Activated CD4-positive, alpha-beta T cell treated with anti-CD3 and anti-CD28 coated beads for 36 hours (primary cell): ENCODE measurements at regions of chrX and their contacts with region 1.

Region 1: GRCh38 chrX:78103623-78104446 is at the start of gene PGK1:
- DNase-seq: peak; percentile 96
- ATAC-seq: peak; percentile 97
- H3K4me3 Mint-ChIP-seq: peak within 1 kb of the TSS; percentile 98
- H3K27ac Mint-ChIP-seq: peak within 1 kb of the TSS; percentile 95
- H3K4me1 Mint-ChIP-seq: peaks cover 31% of the 10 kb centered on the region
- H3K27me3 Mint-ChIP-seq: no peaks in the 10 kb centered on the region
- total RNA-seq, gene PGK1: 1,263 to 1,446 TPM

Region 2: GRCh38 chrX:76172325-76172893 is 1931.4 kb before region 1 on chrX:
- CTCF ChIA-PET with region 1: no interaction called
- POLR2A ChIA-PET with region 1: no interaction called
- intact Hi-C with region 1: loop called in 1 of 2 experiments (anchors 10 kb)
- DNase-seq: no peak
- ATAC-seq: peak; percentile 70
- H3K4me3 Mint-ChIP-seq: peak overlapping the region; percentile 87
- H3K27ac Mint-ChIP-seq: peak overlapping the region; percentile 97
- H3K4me1 Mint-ChIP-seq: peaks cover 49% of the 10 kb centered on the region
- H3K27me3 Mint-ChIP-seq: no peaks in the 10 kb centered on the region

Region 3: GRCh38 chrX:77899081-77899828 is 204.6 kb before region 1 on chrX and contains the start of gene COX7B:
- CTCF ChIA-PET with region 1: interaction called, 3 read pairs
- POLR2A ChIA-PET with region 1: no interaction called
- intact Hi-C with region 1: loop called (anchors 1 to 5 kb)
- DNase-seq: peak; percentile 71
- ATAC-seq: peak; percentile 70
- H3K4me3 Mint-ChIP-seq: peak within 1 kb of the TSS; percentile 96
- H3K27ac Mint-ChIP-seq: peak within 1 kb of the TSS; percentile 97
- H3K4me1 Mint-ChIP-seq: peaks cover 20% of the 10 kb centered on the region
- H3K27me3 Mint-ChIP-seq: no peaks in the 10 kb centered on the region
- total RNA-seq, gene COX7B: 303 to 375 TPM

Region 4: DNA sequence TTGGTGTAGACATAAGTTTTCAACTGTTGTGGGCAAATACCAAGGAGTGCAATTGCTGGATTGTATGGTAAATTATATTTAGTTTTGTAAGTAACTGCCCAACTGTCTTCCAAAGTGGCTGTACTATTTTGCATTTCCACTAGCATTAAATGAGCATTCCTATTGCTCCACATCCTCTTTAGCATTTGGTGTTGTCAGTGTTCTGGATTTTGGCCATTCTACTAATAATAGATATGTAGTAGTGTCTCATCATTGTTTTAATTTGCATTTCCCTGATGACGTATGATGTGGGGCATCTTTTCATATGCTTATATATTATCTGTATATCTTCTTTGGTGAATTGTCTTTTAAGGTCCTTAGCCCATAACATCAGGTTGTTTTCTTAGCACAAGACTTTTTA is 151.7 kb before region 1 on chrX:
- CTCF ChIA-PET with region 1: no interaction called
- POLR2A ChIA-PET with region 1: no interaction called
- intact Hi-C with region 1: no loop called
- DNase-seq: no peak
- ATAC-seq: no peak
- H3K4me3 Mint-ChIP-seq: no peak overlapping the region
- H3K27ac Mint-ChIP-seq: no peak overlapping the region
- H3K4me1 Mint-ChIP-seq: peaks cover 11% of the 10 kb centered on the region
- H3K27me3 Mint-ChIP-seq: no peaks in the 10 kb centered on the region

Region 5: DNA sequence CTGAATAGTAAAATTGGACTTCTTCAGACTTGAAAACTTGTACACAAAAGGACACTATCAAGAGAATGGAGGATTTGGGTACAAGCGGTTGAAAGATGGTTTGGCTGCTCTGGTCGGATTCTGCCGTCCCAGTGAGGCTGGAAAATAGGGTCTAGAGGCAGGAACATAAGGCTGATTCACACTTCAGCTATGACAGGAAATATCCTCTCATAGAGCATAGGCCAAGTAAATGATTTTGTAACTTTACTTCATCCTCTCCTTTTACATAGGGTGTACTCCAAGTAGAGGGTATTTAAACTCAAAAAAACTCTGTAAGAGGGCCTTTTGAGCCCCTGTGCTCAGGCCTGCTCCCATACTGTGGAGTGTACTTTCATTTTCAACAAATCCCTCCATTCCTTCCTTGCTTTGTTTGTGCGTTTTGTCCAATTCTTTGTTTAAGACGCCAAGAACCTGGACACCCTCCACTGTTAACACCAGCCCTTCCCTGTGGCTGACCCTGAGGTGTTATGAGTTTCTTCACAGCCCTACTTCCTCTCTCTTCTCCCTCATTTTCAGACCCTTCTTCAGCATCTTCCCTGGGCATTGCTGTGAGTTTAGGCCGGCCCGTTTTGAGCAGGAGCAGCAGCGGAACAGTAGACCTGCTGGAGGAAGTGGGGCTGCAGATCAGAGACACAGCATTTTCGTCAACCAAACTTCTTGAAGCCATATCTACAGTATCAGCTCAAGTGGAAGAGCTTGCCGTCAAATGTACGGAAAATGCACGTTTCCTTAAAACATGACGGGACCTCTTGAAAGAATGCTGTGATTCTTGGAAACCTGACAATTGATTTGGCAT is 141.6 kb before region 1 on chrX:
- CTCF ChIA-PET with region 1: no interaction called
- POLR2A ChIA-PET with region 1: no interaction called
- intact Hi-C with region 1: loop called (anchors 1 to 5 kb)
- DNase-seq: peak; percentile 16
- ATAC-seq: peak; percentile 54
- H3K4me3 Mint-ChIP-seq: peak overlapping the region; percentile 68
- H3K27ac Mint-ChIP-seq: peak overlapping the region; percentile 92
- H3K4me1 Mint-ChIP-seq: peaks cover 47% of the 10 kb centered on the region
- H3K27me3 Mint-ChIP-seq: no peaks in the 10 kb centered on the region

Region 6: DNA sequence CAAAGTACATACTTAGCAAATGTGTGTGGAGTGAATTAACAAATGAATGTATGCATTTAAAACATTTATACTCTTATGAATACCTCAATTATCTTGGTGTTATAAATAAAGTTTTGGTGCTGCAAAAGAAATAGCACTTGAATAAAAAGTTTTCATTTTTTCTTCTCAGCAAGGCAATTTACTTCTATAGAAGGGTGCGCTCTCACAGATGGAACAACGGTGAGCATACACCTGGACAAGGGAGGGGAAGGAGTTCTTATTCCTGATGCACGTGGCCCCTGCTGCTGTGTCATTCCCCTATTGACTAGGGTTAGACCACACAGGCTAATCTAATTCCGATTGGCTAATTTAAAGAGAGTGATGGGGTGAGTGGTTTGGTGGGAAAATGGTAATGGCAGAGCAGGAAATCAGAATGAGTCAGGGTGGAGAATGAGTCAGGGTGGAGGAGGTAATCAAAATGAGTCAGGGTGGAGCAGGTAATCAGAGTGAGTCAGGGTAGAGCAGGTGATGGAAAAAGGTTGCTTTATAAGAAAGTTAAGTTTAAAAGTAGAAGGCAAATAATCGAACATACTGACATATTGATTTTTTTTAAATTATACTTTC is 27.9 kb before region 1 on chrX:
- CTCF ChIA-PET with region 1: no interaction called
- POLR2A ChIA-PET with region 1: no interaction called
- intact Hi-C with region 1: loop called in 1 of 2 experiments (anchors 1 kb)
- DNase-seq: peak; percentile 30
- ATAC-seq: peak; percentile 44
- H3K4me3 Mint-ChIP-seq: no peak overlapping the region
- H3K27ac Mint-ChIP-seq: peak overlapping the region; percentile 15
- H3K4me1 Mint-ChIP-seq: peaks cover 10% of the 10 kb centered on the region
- H3K27me3 Mint-ChIP-seq: no peaks in the 10 kb centered on the region

Region 7: DNA sequence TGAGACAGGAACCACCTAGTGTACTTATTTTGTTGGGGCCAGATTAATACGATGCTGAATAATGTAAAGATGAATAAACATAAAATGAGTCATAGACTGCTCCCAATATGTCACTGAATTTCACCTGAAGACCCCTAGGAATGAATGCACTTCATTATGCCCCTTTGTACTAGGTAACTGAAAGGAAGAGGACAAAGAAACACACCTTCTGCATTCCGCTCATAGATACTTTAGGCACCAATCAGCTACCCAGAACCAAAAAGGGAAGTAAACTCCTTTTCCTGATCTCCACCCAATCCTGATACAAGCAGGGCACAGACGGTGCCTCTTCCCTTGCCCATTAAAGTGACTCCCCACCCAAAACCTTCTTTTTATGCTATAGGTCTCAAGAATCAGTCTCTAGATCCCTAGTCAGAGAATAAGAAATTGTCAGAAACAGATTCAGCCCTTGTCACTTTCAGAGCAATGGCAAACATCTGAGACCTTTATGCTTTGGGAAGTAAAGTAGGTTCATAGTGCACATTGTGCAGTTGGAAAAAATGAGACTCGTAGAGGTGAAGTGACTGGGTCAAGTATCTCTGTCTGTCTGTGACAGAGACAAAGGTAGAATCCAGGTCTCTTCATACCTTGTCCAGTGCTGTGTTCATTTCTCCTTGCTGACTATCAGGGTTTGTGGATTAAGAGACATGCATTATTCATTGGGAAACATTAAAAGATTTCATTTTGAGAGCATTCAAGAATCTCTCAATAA is 1043.0 kb after region 1 on chrX:
- CTCF ChIA-PET with region 1: no interaction called
- POLR2A ChIA-PET with region 1: no interaction called
- intact Hi-C with region 1: loop called in 1 of 2 experiments (anchors 5 kb)
- DNase-seq: no peak
- ATAC-seq: peak; percentile 52
- H3K4me3 Mint-ChIP-seq: peak overlapping the region; percentile 88
- H3K27ac Mint-ChIP-seq: peak overlapping the region; percentile 97
- H3K4me1 Mint-ChIP-seq: peaks cover 33% of the 10 kb centered on the region
- H3K27me3 Mint-ChIP-seq: no peaks in the 10 kb centered on the region

Region 8: DNA sequence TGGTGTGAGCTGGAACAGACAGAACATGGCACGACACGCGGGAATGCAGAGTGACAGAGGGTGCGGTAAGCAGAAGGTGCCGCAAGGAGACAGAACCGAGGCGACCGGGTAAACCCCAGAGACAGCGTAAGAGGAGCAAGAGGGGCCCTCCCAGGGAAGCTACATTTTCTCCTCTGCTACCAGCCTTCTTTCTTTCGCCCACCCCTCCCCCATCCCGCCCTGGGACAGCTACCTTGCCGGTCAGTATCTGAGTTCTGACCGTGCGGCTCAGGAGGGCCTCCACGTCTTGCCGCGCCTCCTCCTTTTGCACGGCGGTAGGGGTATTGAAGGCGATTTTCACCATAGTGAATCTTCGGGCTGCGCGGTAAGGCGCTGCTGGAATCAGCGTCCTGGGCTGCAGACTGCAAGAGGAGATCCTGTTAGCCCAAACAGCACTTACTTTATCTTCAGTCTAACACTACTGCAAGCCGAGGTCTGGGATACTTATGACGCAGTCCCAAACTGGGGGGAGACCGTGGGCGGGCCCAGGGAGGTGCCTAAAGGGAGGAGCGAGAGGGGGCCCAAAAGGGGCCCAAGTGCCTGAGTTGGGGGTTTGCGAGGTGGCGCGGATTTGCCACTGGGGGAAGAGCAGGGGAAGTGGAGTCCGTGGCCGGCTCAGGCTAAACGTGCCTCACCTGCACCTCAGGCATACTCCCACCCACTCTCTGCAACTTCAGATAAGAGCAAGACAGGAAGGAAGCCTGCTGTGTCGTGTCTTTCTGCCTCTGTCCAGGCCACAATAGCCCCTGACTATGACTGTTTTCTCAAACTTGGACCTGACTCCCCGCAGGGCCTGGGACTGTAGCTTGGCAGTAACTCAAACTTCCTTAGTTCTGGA is 1263.3 kb after region 1 on chrX and contains the start of gene ITM2A:
- CTCF ChIA-PET with region 1: no interaction called
- POLR2A ChIA-PET with region 1: no interaction called
- intact Hi-C with region 1: loop called in 1 of 2 experiments (anchors 10 kb)
- DNase-seq: peak; percentile 78
- ATAC-seq: peak; percentile 80
- H3K4me3 Mint-ChIP-seq: peak within 1 kb of the TSS; percentile 96
- H3K27ac Mint-ChIP-seq: peak within 1 kb of the TSS; percentile 96
- H3K4me1 Mint-ChIP-seq: peaks cover 29% of the 10 kb centered on the region
- H3K27me3 Mint-ChIP-seq: no peaks in the 10 kb centered on the region
- total RNA-seq, gene ITM2A: 89.0 to 112 TPM